WTC11 (cell line): ENCODE measurements at regions of chr1 and their contacts with region 1.

Region 1: GRCh38 chr1:53592521-53592982 is 133.4 kb downstream of the DMRTB1 start:
- DNase-seq: peak; percentile 47
- ATAC-seq: peak; percentile 37
- H3K4me3 Mint-ChIP-seq: no peak overlapping the region
- H3K27ac Mint-ChIP-seq: no peak overlapping the region
- H3K4me1 Mint-ChIP-seq: peaks cover 21% of the 10 kb centered on the region
- H3K27me3 Mint-ChIP-seq: peaks cover 3% of the 10 kb centered on the region; the same call in 1 of the 2 replicates
- CTCF ChIP-seq: no peak

Region 2: DNA sequence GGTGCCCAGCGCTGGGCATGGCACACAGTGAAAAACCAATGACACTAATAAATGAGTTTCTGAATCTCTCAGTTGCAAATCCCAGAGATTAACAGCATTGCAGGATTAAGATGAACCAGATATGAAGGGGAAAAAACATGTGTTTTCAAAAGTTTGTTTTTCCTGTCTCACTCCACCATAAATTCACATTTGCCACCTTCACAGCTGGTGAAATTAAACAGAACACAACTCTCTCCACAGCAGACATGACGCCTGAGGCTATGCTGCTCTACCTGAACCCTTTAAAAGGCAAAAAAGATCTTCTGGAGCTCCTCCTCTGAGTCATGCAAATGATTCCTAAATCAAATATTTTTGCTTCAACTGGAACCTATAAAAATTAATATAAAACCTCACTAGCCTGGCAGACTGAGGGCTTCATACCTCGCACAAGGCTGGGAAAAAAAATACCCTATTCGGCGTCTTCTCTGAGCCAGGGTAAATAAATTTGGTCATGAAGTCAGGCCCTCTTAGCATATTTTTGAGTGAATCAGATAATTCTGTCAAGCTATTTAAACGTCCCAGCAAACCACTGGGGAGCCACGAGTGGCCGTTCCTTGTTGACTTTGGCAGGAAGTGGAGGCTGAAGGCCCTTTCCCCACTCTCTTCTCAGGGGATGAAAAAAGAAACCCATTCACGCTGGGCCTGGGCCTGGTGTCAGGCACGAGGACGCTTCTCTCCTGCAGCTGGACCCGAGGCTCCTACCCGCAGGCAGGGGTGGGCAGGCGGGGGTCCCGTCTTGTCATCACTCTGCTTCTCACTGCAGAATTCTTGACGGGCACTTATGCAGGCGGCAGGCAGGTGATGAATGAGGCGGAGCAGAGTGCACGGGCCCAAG is 80.4 kb before region 1 on chr1:
- CTCF ChIA-PET with region 1: interaction called, 13 read pairs
- POLR2A ChIA-PET with region 1: no interaction called
- DNase-seq: no peak
- ATAC-seq: no peak
- H3K4me3 Mint-ChIP-seq: no peak overlapping the region
- H3K27ac Mint-ChIP-seq: 0 out of 2 replicates have a peak overlapping the region, but pooled peaks have one; percentile 21
- H3K4me1 Mint-ChIP-seq: peaks cover 14% of the 10 kb centered on the region; the same call in 1 of the 2 replicates
- H3K27me3 Mint-ChIP-seq: no peaks in the 10 kb centered on the region
- CTCF ChIP-seq: no peak

Region 3: DNA sequence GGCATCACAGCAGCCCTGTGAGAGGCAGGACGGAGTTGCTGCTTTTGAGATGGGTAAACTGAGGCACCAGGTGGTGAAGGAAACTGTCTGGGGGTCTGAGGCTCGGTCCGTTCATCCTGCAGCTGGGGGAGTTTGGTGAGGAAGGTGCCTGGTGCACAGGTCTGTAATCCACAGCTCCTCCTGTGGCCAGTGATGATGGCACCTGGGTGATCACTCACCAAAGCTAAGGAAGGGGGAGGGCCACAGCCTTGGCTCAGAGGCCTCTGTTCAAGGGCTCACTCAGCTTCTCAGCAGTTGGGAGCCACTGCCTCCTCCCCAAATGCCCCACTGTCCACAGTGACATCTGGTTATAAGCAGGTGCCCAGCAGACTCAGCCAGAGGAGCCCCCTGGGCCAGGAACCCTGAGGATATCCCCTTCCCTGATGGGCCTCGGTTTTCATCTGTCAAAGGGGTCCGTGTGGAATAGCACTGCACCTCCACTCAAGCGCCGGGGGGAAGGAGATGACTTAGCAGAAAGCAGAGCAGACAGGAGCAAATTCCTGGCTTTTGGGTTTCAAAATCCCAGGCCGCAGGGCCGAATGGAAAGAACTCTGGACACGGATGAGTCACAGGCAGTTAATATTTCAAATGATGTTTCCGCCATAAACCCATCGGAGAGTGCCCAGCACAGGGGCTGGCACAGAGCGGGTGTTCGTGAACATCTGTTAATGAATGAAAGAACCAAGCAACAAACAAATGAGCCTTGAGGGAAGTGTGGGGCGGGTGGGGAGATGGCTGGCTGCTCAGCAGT is 50.6 kb before region 1 on chr1:
- CTCF ChIA-PET with region 1: interaction called, 15 read pairs
- POLR2A ChIA-PET with region 1: no interaction called
- DNase-seq: peak; percentile 62
- ATAC-seq: peak; percentile 86
- H3K4me3 Mint-ChIP-seq: no peak overlapping the region
- H3K27ac Mint-ChIP-seq: no peak overlapping the region
- H3K4me1 Mint-ChIP-seq: no peaks in the 10 kb centered on the region; the same call in 1 of the 2 replicates
- H3K27me3 Mint-ChIP-seq: no peaks in the 10 kb centered on the region
- CTCF ChIP-seq: no peak

Region 4: DNA sequence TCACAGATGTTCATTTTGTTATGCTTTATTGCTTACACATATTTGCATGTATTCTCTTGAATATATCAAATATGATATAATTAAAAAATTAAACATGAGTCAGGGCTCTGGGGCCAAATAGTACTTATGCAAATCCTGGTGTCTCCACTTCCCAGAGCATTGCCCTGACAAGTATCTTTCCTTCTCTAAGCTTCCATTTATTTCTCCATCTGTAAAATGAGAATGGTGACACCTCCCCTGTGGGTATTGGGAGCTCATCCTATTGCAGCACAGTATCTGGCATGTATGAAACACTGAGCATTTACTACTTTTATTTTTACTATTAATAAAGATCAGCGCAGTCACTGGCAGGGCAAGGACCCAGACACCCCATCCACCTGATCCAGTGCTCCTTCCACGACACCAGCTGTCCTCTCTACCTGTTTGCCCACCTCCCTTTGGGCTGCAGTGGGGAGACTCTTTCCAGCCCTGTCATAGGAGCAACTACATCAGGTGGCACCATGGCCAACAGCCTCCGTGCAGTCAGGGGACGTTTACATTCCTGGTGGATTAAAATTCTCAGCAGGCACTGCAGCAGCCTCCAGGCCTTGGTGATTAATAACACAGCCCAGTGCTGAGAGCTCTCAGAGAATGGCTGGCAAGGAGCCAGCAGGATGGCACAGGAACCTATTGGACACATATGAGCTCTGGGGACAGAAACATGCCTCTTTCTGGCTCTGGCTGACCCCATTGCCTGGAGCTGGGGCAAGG is 20.3 kb before region 1 on chr1:
- CTCF ChIA-PET with region 1: interaction called, 62 read pairs
- POLR2A ChIA-PET with region 1: no interaction called
- DNase-seq: peak; percentile 12
- ATAC-seq: peak; percentile 48
- H3K4me3 Mint-ChIP-seq: no peak overlapping the region
- H3K27ac Mint-ChIP-seq: no peak overlapping the region
- H3K4me1 Mint-ChIP-seq: peaks cover 18% of the 10 kb centered on the region
- H3K27me3 Mint-ChIP-seq: peaks cover under 1% of the 10 kb centered on the region
- CTCF ChIP-seq: no peak

Region 5: GRCh38 chr1:53606651-53607051 is 14.1 kb after region 1 on chr1:
- CTCF ChIA-PET with region 1: interaction called, 28 read pairs
- POLR2A ChIA-PET with region 1: no interaction called
- DNase-seq: peak; percentile 45
- ATAC-seq: peak; percentile 96
- H3K4me3 Mint-ChIP-seq: no peak overlapping the region
- H3K27ac Mint-ChIP-seq: no peak overlapping the region
- H3K4me1 Mint-ChIP-seq: peaks cover 6% of the 10 kb centered on the region; the same call in 1 of the 2 replicates
- H3K27me3 Mint-ChIP-seq: peaks cover 5% of the 10 kb centered on the region; the same call in 1 of the 2 replicates
- CTCF ChIP-seq: no peak

Region 6: DNA sequence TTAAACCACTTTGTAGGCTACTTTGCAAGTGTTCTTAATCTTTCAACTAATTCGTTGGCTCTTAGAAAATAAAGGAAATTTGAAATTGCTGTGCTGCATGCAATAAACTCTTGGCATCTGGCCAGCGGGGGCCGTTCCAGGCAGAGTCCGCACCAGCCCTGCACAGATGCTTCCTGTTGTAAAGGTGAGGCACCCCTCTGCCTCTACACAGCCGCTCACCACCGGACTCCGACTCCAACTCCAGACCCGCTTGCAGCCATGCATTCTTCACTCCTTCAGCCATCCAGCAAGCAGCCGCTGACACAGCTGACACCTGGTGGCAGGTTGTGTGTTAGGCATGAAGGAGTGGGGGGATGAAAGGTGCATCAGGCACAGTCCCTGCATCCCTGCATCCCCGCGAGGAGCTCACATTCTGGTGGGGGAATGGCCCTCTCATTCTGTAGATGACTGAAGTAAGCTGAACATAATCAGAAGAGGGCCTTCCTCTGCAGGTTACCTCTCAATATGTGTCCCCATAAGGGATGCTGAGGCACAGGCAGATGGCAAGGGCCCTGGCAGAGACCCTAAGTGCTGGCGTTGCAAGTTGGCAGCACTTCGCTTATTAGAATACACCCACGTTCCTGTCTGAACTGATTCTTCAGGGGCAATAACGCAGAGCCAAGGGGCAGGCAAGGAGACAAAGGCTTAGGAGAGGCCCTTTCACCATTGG is 89.6 kb after region 1 on chr1:
- CTCF ChIA-PET with region 1: interaction called, 32 read pairs
- POLR2A ChIA-PET with region 1: no interaction called
- DNase-seq: peak; percentile 84
- ATAC-seq: peak; percentile 88
- H3K4me3 Mint-ChIP-seq: peak overlapping the region; percentile 17; the same call in 1 of the 2 replicates
- H3K27ac Mint-ChIP-seq: no peak overlapping the region
- H3K4me1 Mint-ChIP-seq: peaks cover 35% of the 10 kb centered on the region
- H3K27me3 Mint-ChIP-seq: peaks cover 20% of the 10 kb centered on the region
- CTCF ChIP-seq: peak; percentile 39

Region 7: DNA sequence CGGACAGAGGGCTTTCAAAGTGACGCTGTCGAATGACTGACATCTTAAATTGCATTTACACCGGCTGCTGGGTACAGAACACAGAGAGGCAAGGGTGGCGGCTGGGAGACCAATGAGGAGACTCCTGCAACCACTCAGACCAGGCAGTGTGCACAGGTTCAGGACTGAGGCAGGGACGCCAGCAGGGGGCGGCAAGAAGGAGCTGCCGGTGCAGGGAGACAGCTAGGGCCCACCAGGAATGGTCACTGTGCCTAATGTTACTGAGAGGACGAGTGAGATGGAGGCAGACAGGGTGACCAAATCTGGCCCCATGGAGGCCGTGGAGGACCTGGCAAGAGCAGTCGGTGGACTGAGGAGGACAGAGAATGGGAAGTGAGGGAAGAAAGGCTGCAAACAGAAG is 122.9 kb after region 1 on chr1:
- CTCF ChIA-PET with region 1: interaction called, 11 read pairs
- POLR2A ChIA-PET with region 1: no interaction called
- DNase-seq: peak; percentile 79
- ATAC-seq: peak; percentile 98
- H3K4me3 Mint-ChIP-seq: no peak overlapping the region
- H3K27ac Mint-ChIP-seq: no peak overlapping the region
- H3K4me1 Mint-ChIP-seq: no peaks in the 10 kb centered on the region; the same call in 1 of the 2 replicates
- H3K27me3 Mint-ChIP-seq: no peaks in the 10 kb centered on the region; the same call in 1 of the 2 replicates
- CTCF ChIP-seq: 0 out of 2 replicates have a peak, but pooled peaks have one; percentile 49